Mammary epithelial cell (primary cell): ENCODE measurements at regions of chr16 and their contacts with region 1.

Region 1: DNA sequence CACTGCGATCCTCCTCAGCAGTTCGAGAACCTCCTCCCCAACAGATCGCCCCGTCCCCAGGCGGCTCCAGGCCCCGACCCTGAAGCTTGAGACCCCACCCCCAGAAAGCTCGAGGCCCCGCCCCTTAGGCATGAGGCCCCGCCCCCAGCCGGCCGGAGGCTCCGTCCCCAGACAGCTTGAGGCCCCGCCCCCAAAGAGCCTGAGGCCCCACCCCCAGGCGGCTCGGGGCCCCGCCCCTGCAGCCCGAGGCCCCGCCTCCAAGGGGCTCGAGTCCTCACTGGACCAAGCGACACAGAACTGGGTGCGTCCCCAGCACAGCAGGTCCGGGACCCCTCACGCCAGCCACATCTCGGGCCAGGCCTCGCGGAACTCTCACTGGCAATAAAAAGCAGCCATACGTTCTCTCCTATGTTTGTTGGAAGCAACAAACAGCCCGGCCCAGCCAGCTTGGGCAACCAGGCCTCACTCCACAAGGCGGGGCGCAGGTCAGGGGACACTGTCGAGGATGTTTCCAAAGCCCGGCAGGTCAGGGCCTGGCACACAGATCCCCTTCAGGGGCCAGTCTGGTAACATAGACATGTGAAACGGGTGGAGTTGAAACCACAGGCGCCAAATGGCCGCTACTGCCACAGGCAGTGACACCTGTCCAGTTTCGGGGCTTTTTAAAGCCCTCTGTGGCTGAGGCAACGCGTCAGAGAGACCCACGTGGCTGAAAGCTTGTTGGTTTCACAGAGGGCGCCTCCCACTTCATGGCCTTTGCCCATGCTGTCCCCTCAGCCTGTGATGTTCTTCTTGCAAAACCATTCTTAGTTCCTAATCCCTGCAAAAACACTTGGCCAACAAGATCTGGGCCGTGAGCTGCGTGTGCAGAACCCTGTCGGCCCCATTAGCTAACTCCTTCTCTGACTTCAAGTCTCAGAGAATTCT is 224.2 kb downstream of the PARN start:
- DNase-seq: no peak
- H3K4me3 ChIP-seq: no peak overlapping the region
- H3K27ac ChIP-seq: no peak overlapping the region
- H3K4me1 ChIP-seq: no peaks in the 10 kb centered on the region
- H3K27me3 ChIP-seq: no peaks in the 10 kb centered on the region
- CTCF ChIP-seq: no peak

Region 2: DNA sequence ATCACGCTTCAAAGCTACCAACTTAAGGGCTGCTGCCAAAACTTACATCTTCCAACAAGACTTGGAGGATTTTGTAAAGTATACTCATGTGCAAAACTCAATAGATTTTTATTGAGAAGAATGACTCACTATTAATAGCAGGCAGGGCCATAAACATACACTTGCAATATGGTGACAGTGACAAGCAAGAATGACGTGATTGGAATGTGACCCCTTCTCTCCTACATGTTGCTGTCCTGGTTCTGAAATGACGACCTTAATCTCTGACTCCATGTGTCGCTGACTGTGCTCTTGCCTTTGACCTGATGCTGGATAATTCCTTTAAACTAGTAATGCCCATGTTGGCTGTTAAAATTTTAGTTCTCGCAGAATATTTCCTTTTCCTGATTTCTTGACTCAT is 49.7 kb after region 1 on chr16:
- CTCF ChIA-PET with region 1: no interaction called
- dilution Hi-C with region 1: loop called (anchors 5 kb)
- in situ Hi-C with region 1: no loop called
- intact Hi-C with region 1: no loop called
- DNase-seq: no peak
- H3K4me3 ChIP-seq: no peak overlapping the region
- H3K27ac ChIP-seq: no peak overlapping the region
- H3K4me1 ChIP-seq: no peaks in the 10 kb centered on the region
- H3K27me3 ChIP-seq: no peaks in the 10 kb centered on the region
- CTCF ChIP-seq: no peak